Left cardiac atrium (tissue), 4 donors: ENCODE measurements at regions of chr4 and their contacts with region 1.

Region 1: GRCh38 chr4:145618932-145619638 is at the start of gene MMAA:
- DNase-seq: peak; percentile 97
- ATAC-seq: peak; percentile 100
- total RNA-seq, gene MMAA: 6.6 to 8.7 TPM

Region 2: GRCh38 chr4:145154573-145154972 is 464.5 kb before region 1 on chr4:
- intact Hi-C with region 1: loop called in 1 of 2 experiments (anchors 10 kb)
- DNase-seq: no peak
- ATAC-seq: peak; percentile 80 to 85

Region 3: DNA sequence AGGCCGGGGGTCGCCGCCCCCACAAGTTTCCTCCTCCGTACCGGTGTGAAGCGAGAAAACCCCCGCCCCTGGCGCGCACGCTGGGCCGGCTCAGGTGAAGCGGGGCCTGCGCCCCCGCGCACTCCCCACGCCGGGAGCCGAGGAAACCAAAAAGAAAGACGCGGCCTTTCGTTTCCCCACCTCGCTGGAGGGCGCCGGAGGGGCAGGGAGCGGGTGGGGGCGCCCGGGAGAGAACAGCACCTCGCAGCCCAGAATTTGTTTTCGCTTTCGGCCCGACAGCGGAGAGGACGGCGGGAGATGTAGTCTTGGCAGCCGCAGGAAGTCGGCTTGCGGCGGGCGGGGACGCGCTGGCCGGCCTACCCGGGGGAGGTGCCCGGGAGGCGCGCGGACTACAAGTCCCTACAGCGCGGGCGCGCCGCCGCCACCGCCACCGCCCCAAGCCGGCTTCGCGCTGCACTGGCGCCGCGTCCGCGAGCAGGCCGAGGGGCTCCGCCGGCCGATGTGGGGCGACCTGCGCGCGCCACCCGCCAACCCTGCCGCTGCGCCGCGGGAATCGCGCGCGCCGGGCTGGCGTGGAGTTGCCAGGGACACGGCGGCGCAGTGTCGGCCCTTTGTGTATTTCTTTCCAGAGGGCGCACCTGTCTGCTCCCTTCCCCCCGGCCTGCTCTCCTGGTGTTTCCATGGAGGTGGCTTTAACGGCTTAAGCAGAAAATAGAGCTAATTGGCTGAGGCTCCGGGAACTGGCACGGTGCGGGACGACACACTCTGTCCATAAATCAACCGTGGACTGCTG is 438.6 kb before region 1 on chr4 and contains the start of gene OTUD4:
- intact Hi-C with region 1: loop called in 1 of 2 experiments (anchors 5 kb)
- DNase-seq: peak; percentile 96
- ATAC-seq: peak; percentile 96 to 97
- total RNA-seq, gene OTUD4: 26.5 to 27.1 TPM

Region 4: DNA sequence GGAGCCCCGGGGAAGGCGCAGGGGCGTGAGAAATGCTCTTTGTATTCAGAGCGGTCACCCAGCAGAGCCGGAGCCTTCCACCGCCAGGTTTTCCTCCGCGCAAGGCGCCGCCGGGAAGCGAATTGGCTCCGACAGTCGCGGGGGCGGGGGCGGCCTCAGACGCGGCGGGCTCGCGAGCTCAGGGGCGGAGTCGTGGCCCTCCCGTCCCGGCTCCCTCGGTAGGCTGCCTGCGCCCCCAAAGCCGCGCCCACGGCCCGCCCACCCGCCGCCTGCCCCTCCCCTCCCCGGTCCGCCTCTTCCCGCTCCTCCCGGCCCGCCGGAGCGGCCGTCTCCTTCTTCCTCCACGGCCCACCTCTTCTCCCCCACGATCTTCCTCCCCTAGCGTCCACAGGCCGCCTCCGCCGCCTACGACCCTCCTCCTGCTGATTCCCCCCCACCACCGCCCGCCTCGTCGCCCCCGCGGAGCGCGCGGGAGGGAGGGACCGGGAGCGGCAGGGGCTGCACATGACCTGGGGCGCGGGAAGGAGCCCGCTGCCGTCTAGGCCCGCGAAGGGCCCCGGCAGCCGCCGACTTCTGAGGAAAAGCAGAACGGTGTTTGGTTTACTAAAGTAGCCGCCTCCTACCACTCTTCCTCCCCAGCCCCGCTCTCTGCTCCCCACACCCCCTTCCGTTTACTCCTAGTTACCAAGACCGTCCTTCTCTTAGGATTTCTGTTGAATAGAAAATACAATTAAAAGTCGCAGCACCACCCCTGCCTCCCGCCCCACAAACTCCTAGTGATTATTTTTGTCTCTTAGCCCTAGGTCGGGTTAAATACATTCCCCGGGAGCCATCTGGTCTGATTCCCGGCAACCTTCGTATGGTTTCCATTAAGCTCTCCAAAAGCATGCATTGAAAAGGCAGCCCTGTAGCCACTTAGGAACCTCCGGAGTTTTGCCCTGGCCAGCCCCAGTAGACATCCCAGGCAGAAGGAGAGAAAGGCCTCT is 114.1 kb after region 1 on chr4:
- intact Hi-C with region 1: loop called in 1 of 2 experiments (anchors 5 kb)
- DNase-seq: peak; percentile 97
- ATAC-seq: peak; percentile 94 to 95

Region 5: DNA sequence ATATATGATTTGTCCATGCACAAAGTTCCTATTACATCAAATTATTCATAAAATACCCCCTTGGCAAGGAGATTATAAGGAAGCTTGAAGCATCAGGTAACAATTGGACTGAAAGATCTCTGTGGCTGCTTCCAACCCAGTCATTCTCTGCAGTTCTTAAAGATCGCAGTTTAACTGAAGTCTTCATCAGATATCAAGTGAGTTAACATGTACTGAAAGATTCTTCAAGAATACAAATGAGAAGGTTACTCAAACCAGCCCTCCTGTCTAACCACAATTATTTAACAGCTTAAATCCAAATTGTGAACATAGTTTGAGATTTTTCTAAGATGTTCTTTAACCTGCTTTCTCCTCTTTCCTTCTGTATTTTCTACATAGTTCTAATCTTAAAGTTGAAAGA is 846.5 kb after region 1 on chr4:
- intact Hi-C with region 1: no loop called
- DNase-seq: no peak
- ATAC-seq: no peak